Astrocyte of the cerebellum (primary cell): ENCODE measurements at regions of chr7 and their contacts with region 1.

Region 1: DNA sequence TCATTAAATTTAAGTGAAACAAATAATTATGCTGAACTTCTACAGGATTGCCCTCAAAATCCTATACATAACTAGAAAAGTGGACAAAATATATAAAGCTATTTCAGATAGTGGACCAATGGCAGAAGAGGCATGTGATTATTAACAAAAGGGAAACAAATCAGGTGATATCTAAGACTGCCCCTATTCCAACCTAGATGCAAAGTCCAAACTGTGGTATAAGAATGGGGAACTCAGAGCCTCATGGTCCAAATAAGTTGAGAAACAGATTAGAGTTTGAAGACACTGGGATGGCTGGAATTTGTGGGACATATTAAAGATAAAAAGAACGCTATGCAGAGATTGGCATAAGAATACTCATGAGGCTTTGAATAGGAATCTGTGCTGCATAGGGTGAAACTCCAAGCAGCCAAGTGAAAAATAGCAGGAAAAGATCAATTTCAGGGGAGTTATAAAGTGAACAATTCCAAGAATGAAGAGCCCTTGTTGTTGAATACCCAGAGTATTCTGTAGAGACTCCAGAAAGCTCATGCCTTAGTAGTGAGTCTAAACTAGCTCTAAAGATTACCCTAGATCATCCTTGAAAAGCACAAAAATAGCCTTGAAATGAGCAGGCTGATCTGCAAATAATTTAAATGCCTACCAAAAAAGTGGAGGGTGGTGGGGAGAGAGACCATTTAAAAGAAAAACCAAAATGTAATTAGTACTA is 152.4 kb downstream of the IMMP2L start:
- DNase-seq: no peak
- H3K4me3 ChIP-seq: no peak overlapping the region
- CTCF ChIP-seq: no peak

Region 2: DNA sequence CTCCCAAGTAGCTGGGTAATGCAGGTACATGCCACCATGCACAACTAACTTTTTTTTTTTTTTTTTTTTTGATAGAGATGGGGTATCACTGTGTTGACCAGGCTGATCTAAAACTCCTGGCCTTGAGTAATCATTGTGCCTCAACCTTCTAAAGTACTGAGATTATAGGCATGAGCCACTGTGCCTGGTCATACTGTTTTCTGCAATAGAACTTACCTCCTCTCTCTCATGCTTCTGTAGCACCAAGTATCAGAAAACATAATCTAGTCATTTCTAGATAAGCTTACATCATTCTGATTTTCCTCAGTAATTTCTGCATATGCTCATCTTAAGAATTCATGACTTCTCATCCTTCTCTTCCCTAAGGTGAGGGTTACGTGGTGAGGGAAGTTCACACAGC is 57.5 kb before region 1 on chr7:
- in situ Hi-C with region 1: loop called (anchors 5 kb)
- DNase-seq: no peak
- H3K4me3 ChIP-seq: no peak overlapping the region
- CTCF ChIP-seq: no peak

Region 3: GRCh38 chr7:111459756-111460280 is 50.0 kb after region 1 on chr7:
- in situ Hi-C with region 1: no loop called
- DNase-seq: no peak
- H3K4me3 ChIP-seq: no peak overlapping the region
- CTCF ChIP-seq: no peak

Region 4: GRCh38 chr7:112510001-112510742 is 1100.3 kb after region 1 on chr7:
- in situ Hi-C with region 1: no loop called
- DNase-seq: peak; percentile 53
- H3K4me3 ChIP-seq: no peak overlapping the region
- CTCF ChIP-seq: no peak